Ovary (tissue), 10 donors: ENCODE measurements at regions of chr7 and their contacts with region 1.

Region 1: GRCh38 chr7:132518102-132518838 is 58.0 kb downstream of the PLXNA4 start:
- DNase-seq: no peak
- H3K4me3 ChIP-seq: no peak overlapping the region
- H3K27ac ChIP-seq: no peak overlapping the region
- H3K4me1 ChIP-seq: peaks cover 15% of the 10 kb centered on the region
- H3K27me3 ChIP-seq: no peaks in the 10 kb centered on the region
- CTCF ChIP-seq: no peak
- EP300 ChIP-seq: no peak
- POLR2A ChIP-seq: no peak

Region 2: GRCh38 chr7:132368246-132368900 is 149.9 kb before region 1 on chr7:
- intact Hi-C with region 1: no loop called
- DNase-seq: no peak
- H3K4me3 ChIP-seq: no peak overlapping the region
- H3K27ac ChIP-seq: no peak overlapping the region
- H3K4me1 ChIP-seq: no peaks in the 10 kb centered on the region
- H3K27me3 ChIP-seq: no peaks in the 10 kb centered on the region
- CTCF ChIP-seq: no peak
- EP300 ChIP-seq: no peak
- POLR2A ChIP-seq: no peak

Region 3: GRCh38 chr7:132430861-132431822 is 87.1 kb before region 1 on chr7:
- intact Hi-C with region 1: loop called in 1 of 4 experiments (anchors 10 kb)
- DNase-seq: no peak
- H3K4me3 ChIP-seq: no peak overlapping the region
- H3K27ac ChIP-seq: no peak overlapping the region
- H3K4me1 ChIP-seq: peaks cover 2% of the 10 kb centered on the region
- H3K27me3 ChIP-seq: no peaks in the 10 kb centered on the region
- CTCF ChIP-seq: no peak
- EP300 ChIP-seq: no peak
- POLR2A ChIP-seq: no peak

Region 4: GRCh38 chr7:132603220-132603833 is 85.1 kb after region 1 on chr7:
- intact Hi-C with region 1: no loop called
- DNase-seq: no peak
- H3K4me3 ChIP-seq: no peak overlapping the region
- H3K27ac ChIP-seq: no peak overlapping the region
- H3K4me1 ChIP-seq: no peaks in the 10 kb centered on the region
- H3K27me3 ChIP-seq: no peaks in the 10 kb centered on the region
- CTCF ChIP-seq: no peak
- EP300 ChIP-seq: no peak
- POLR2A ChIP-seq: no peak